Activated CD8-positive, alpha-beta T cell treated with anti-CD3 and anti-CD28 coated beads for 36 hours (primary cell): ENCODE measurements at regions of chr11 and their contacts with region 1.

Region 1: DNA sequence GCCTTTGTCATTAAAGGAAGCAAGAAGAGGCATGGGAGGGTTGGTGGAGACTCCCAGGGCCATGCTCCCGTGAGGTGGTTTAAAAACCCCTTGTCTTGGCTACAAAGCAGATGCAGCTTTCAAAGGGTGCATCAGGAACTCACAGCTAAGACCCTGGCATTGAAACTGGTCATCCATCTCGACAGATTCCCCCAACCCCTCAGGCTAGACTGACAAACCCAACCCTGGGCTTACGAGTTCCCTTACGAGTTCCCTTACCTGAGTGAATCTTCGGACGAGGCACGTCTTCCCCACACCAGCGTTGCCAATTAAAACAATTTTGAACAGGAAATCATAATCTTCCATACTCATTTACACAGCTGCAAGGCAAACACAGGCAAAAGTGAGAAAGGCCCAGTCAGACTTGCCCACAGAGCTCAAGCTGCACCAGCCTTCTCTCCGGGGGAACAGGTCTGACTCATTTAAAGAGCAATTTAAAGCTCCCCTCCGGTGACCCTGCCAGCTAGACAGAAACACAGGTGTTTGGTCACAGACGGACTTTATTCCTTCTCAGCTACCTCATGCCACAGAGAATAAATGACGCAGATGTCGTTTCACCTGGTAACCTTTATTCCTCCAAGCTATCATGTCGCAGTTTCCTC is 74.6 kb downstream of the RAB30 start:
- DNase-seq: peak; percentile 72
- ATAC-seq: peak; percentile 63
- H3K4me3 Mint-ChIP-seq: no peak overlapping the region
- H3K27ac Mint-ChIP-seq: peak overlapping the region; percentile 88
- H3K4me1 Mint-ChIP-seq: peaks cover 73% of the 10 kb centered on the region
- H3K27me3 Mint-ChIP-seq: no peaks in the 10 kb centered on the region
- CTCF ChIP-seq: no peak

Region 2: DNA sequence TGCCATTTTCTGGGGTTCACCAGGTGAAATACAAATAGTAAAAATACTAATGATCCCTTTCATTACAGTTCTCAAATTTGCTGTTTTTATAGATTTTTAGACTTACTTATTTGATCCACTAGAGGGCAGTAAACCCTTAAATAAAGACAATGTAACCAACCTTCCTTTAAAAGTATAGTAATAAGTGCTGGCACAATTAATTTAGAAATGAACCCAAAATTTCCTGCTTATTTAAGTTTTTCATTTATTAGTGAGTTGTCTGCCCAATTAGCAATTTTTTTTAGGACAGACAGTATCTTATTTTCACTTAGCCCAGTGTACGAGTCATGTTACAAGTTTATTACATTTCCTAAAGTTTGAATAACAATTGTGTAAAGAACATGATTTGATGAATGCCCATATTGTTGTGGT is 90.8 kb before region 1 on chr11:
- CTCF ChIA-PET with region 1: no interaction called
- POLR2A ChIA-PET with region 1: interaction called, 5 read pairs
- intact Hi-C with region 1: loop called (anchors 5 kb)
- DNase-seq: no peak
- ATAC-seq: no peak
- H3K4me3 Mint-ChIP-seq: no peak overlapping the region
- H3K27ac Mint-ChIP-seq: no peak overlapping the region
- H3K4me1 Mint-ChIP-seq: peaks cover 52% of the 10 kb centered on the region
- H3K27me3 Mint-ChIP-seq: no peaks in the 10 kb centered on the region
- CTCF ChIP-seq: peak; percentile 72

Region 3: DNA sequence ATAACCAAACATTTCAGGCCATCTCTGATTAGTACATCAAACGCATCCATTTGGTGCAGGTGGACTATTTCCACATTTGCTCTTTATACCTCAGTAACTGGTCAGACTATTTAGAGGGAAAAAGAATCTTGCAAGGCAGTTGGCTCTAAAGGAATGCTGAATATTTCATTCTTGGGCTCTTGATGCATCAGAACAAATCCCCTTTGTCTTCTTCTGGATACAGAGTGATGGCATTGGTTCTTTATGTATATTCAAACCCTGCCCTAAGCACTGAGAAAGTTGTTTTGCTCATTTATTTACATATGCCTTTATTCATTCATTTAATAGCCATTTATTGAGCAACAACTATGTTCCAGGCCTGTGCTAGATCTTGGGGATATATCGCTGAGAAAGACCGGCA is 105.7 kb after region 1 on chr11:
- CTCF ChIA-PET with region 1: no interaction called
- POLR2A ChIA-PET with region 1: no interaction called
- intact Hi-C with region 1: no loop called
- DNase-seq: no peak
- ATAC-seq: no peak
- H3K4me3 Mint-ChIP-seq: no peak overlapping the region
- H3K27ac Mint-ChIP-seq: no peak overlapping the region
- H3K4me1 Mint-ChIP-seq: no peaks in the 10 kb centered on the region
- H3K27me3 Mint-ChIP-seq: no peaks in the 10 kb centered on the region
- CTCF ChIP-seq: no peak